T-cell (primary cell): ENCODE measurements at regions of chr10 and their contacts with region 1.

Region 1: GRCh38 chr10:71772832-71773377 is 415 bp downstream of the VSIR start:
- DNase-seq: peak in 1 of 35 experiments; percentile 19
- ATAC-seq: peak in 3 of 4 experiments; percentile 1 to 15 (median 13)
- H3K4me3 ChIP-seq: peak overlapping the region; percentile 89 to 97
- H3K4me3 Mint-ChIP-seq: peak overlapping the region; percentile 90 to 97 (median 93)
- H3K27ac ChIP-seq: peak overlapping the region; percentile 82
- H3K27ac Mint-ChIP-seq: peak overlapping the region; percentile 97 to 98
- H3K4me1 ChIP-seq: peaks cover 40 to 80% of the 10 kb centered on the region in 2 experiments
- H3K4me1 Mint-ChIP-seq: peaks cover 72 to 81% (median 76%) of the 10 kb centered on the region in 3 donors
- H3K27me3 ChIP-seq: peaks cover 0 to 3% of the 10 kb centered on the region in 2 experiments
- H3K27me3 Mint-ChIP-seq: no peaks in the 10 kb centered on the region

Region 2: GRCh38 chr10:71128311-71128980 is 644.5 kb before region 1 on chr10:
- CTCF ChIA-PET with region 1: no interaction called
- POLR2A ChIA-PET with region 1: no interaction called
- DNase-seq: no peak
- ATAC-seq: no peak
- H3K4me3 ChIP-seq: no peak overlapping the region
- H3K4me3 Mint-ChIP-seq: no peak overlapping the region
- H3K27ac ChIP-seq: no peak overlapping the region
- H3K27ac Mint-ChIP-seq: no peak overlapping the region
- H3K4me1 ChIP-seq: no peaks in the 10 kb centered on the region
- H3K4me1 Mint-ChIP-seq: peaks cover 6 to 8% (median 7%) of the 10 kb centered on the region in 3 donors
- H3K27me3 ChIP-seq: peaks cover 0 to 49% of the 10 kb centered on the region in 2 experiments
- H3K27me3 Mint-ChIP-seq: peaks cover 31 to 47% of the 10 kb centered on the region in 2 donors

Region 3: DNA sequence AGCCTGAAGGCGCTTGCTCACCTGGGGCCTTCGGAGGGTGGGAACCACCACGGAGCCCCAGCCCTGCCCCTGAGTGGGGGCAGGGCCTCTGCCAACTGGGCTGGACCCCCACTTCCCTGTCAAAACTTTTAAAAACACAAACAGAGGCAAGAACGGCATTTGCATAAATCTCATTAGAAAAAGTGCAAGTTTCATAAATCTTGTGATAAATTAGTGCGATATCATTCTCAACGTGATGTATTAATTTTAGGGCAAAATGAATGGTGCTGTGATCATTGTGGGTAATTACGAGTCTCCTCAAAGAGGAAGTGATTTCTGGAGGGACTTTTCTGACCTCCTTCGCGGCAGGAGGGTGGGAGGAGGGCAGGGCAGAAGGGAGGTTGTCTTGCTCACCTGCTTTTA is 277.9 kb before region 1 on chr10:
- CTCF ChIA-PET with region 1: no interaction called
- POLR2A ChIA-PET with region 1: no interaction called
- DNase-seq: no peak
- ATAC-seq: no peak
- H3K4me3 ChIP-seq: no peak overlapping the region
- H3K4me3 Mint-ChIP-seq: no peak overlapping the region
- H3K27ac ChIP-seq: no peak overlapping the region
- H3K27ac Mint-ChIP-seq: no peak overlapping the region
- H3K4me1 ChIP-seq: no peaks in the 10 kb centered on the region
- H3K4me1 Mint-ChIP-seq: no peaks in the 10 kb centered on the region
- H3K27me3 ChIP-seq: peaks cover 0 to 12% of the 10 kb centered on the region in 2 experiments
- H3K27me3 Mint-ChIP-seq: no peaks in the 10 kb centered on the region

Region 4: DNA sequence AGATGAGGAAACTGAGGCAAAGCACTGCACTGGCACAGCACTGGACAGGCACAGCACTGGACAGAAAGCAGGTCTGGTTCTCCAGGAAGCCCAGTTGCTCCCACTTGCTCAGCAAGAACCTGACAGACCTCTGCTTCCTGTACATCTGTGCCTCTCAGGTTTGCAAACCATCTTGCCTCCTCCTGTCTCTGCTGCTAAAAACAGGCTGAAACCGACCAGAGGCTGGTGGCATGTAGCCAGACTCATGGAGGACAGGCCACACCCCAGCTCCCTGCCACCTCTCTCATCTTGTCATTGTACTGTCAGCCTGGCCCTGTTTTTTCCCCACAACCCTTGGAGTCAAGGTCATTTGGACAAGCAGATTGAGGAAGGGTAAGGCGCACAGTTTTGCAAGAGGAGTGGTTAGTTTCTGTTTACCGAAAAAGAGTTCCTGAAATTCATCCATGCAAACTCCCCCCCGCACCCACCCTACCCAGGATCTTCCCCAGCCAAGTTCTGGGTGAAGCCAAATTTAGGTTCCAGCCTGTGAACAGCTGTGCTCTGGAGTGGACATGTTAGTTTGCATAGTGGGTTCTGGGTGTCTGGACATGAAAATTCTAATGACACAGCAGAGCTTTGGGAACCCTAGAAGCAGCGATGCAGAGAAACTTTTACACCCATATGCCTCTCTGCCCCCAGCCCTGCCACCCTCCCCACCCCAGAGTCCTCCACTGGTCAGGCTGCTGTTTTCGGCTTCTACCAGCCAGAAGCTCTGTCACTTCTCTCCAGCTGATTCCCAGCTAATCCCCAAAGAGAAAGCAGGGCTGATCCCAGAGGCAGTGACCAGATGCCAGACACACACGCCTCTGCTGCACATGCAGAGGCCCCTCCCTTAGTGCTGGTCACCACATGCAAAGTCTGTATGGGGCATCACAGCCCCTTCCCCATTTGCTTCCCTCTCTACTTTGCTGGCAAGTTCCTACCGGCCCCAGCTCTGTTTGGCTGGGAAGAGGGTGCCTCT is 44.9 kb before region 1 on chr10:
- CTCF ChIA-PET with region 1: interaction called, 5 to 10 read pairs
- POLR2A ChIA-PET with region 1: interaction called, 3 to 4 read pairs
- DNase-seq: peak; percentile 60 to 89 (median 75)
- ATAC-seq: peak; percentile 75 to 81 (median 78)
- H3K4me3 ChIP-seq: peak overlapping the region; percentile 2 to 16
- H3K4me3 Mint-ChIP-seq: peak overlapping the region; percentile 52 to 73 (median 57)
- H3K27ac ChIP-seq: peak overlapping the region; percentile 95
- H3K27ac Mint-ChIP-seq: peak overlapping the region; percentile 98
- H3K4me1 ChIP-seq: peaks cover 51 to 99% of the 10 kb centered on the region in 2 experiments
- H3K4me1 Mint-ChIP-seq: peaks cover 74 to 94% (median 93%) of the 10 kb centered on the region in 3 donors
- H3K27me3 ChIP-seq: no peaks in the 10 kb centered on the region
- H3K27me3 Mint-ChIP-seq: no peaks in the 10 kb centered on the region

Region 5: GRCh38 chr10:71795248-71795647 is 22.3 kb after region 1 on chr10:
- CTCF ChIA-PET with region 1: no interaction called
- POLR2A ChIA-PET with region 1: no interaction called
- DNase-seq: peak in 1 of 35 experiments; percentile 27
- ATAC-seq: no peak
- H3K4me3 ChIP-seq: no peak overlapping the region
- H3K4me3 Mint-ChIP-seq: no peak overlapping the region
- H3K27ac ChIP-seq: no peak overlapping the region
- H3K27ac Mint-ChIP-seq: no peak overlapping the region
- H3K4me1 ChIP-seq: peaks cover 7 to 25% of the 10 kb centered on the region in 2 experiments
- H3K4me1 Mint-ChIP-seq: peaks cover 15 to 18% (median 16%) of the 10 kb centered on the region in 3 donors
- H3K27me3 ChIP-seq: peaks cover 0 to 13% of the 10 kb centered on the region in 2 experiments
- H3K27me3 Mint-ChIP-seq: no peaks in the 10 kb centered on the region

Region 6: GRCh38 chr10:72692057-72692910 is 919.4 kb after region 1 on chr10 and contains the start of gene MCU:
- CTCF ChIA-PET with region 1: no interaction called
- POLR2A ChIA-PET with region 1: no interaction called
- DNase-seq: peak; percentile 88 to 95 (median 91)
- ATAC-seq: peak; percentile 94 to 98 (median 96)
- H3K4me3 ChIP-seq: peak within 1 kb of the TSS; percentile 85 to 89
- H3K4me3 Mint-ChIP-seq: peak within 1 kb of the TSS; percentile 84 to 93 (median 87)
- H3K27ac ChIP-seq: peak within 1 kb of the TSS; percentile 38
- H3K27ac Mint-ChIP-seq: peak within 1 kb of the TSS; percentile 75 to 89
- H3K4me1 ChIP-seq: peaks cover 8 to 14% of the 10 kb centered on the region in 2 experiments
- H3K4me1 Mint-ChIP-seq: peaks cover 31 to 33% (median 32%) of the 10 kb centered on the region in 3 donors
- H3K27me3 ChIP-seq: no peaks in the 10 kb centered on the region
- H3K27me3 Mint-ChIP-seq: no peaks in the 10 kb centered on the region
- total RNA-seq, gene MCU: 10.1 to 13.6 (median 11.6) TPM